PC-9 (cell line): ENCODE measurements at regions of chr6 and their contacts with region 1.

Region 1: DNA sequence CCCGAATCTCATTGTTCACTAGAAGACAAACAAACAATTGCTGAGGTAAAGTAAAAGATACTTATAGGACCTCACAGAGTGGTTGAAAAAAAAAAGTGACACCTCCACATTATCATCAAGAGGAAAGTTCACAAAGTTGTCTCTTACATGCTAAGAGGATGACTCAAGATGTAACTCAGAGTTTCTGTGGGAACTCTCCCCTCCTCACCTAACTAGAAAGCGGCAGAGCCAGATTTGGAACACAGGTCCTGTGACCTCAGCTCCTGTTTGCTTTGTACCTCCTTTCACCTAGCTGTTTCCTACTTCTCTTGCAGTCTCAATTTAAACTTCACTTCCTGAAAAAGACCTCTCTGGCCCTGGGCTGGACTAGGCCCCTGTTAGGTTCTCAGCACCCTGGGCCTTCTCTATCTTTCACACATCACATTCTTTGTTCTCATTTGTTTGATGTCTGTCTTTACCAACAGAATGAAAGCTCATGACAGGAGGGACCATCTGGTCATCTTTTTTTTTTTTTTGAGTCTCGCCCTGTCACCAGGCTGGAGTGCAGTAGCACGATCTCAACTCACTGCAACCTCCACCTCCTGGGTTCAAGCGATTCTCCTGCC is 60.8 kb downstream of the CD24 start:
- DNase-seq: peak; percentile 43 to 98
- H3K4me3 ChIP-seq: no peak overlapping the region
- H3K27ac ChIP-seq: peak overlapping the region; percentile 98
- H3K4me1 ChIP-seq: peaks cover 46% of the 10 kb centered on the region
- H3K27me3 ChIP-seq: no peaks in the 10 kb centered on the region
- CTCF ChIP-seq: no peak

Region 2: GRCh38 chr6:106751501-106752252 is 162.1 kb before region 1 on chr6:
- CTCF ChIA-PET with region 1: no interaction called
- POLR2A ChIA-PET with region 1: no interaction called
- intact Hi-C with region 1: loop called (anchors 2 kb)
- DNase-seq: peak; percentile 85 to 95
- H3K4me3 ChIP-seq: no peak overlapping the region
- H3K27ac ChIP-seq: peak overlapping the region; percentile 73
- H3K4me1 ChIP-seq: peaks cover 44% of the 10 kb centered on the region
- H3K27me3 ChIP-seq: no peaks in the 10 kb centered on the region
- CTCF ChIP-seq: no peak